GM10248 (cell line): ENCODE measurements at regions of chr7 and their contacts with region 1.

Region 1: DNA sequence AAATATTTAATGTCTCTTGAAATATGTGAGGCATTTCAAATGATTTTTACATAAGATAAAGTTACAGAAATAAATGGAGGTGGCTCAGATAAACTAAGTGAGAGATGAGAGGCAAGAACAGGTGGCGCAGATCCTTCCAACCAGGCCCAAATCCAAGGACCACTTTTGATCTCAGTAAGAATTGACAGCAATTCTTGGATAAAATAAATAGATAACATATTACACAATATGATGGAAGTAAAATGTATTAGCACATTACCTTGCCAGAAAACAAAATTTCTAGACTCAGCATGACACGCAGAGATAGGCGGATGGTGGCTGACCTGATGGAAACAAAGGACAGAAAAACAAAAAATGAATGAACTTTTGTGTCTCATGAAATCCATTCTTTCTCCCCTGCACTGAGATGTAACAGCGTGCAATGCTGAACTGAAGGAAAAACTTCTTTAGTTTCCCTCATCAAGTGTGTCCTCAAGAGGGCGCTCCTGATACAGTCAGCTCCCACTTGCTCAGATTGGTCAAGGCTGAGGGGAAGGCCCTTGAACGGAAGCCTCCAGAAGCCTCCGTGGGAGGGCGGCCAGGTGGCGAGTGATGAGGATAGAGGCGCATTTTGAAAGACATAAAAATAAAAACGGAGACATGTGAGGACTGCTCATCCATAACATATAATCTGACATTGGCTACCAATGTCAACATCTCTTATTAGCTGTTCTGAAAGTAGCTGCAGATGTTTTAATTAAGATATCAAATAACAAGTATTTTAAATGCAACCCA is 62.8 kb upstream of the GSDME start:
- DNase-seq: peak; percentile 81
- CTCF ChIP-seq: peak; percentile 75

Region 2: DNA sequence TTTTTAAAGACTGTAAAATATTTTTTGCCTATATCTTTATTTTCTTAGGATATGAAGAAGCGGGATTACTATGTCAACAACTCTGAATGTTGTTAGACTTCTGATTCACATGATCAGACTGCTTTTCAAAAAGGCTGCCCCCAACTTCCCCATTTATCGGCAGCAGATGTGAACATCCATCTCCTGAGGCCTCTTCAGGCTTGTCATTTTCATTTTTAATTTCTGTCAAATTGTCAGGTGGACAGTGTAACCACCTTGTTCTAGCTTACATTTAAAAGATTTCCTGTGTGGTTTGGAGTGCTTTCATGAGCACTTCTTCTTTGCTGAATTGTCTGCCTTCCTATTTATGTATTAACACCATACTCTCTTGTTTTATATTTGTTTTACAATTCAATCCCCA is 16.0 kb after region 1 on chr7:
- CTCF ChIA-PET with region 1: interaction called, 75 read pairs
- POLR2A ChIA-PET with region 1: no interaction called
- DNase-seq: peak; percentile 42
- CTCF ChIP-seq: no peak

Region 3: GRCh38 chr7:24911213-24911603 is 91.1 kb after region 1 on chr7:
- CTCF ChIA-PET with region 1: interaction called, 11 read pairs
- POLR2A ChIA-PET with region 1: no interaction called
- DNase-seq: no peak
- CTCF ChIP-seq: no peak

Region 4: GRCh38 chr7:25069900-25070443 is 249.9 kb after region 1 on chr7:
- CTCF ChIA-PET with region 1: interaction called, 72 read pairs
- POLR2A ChIA-PET with region 1: no interaction called
- DNase-seq: peak; percentile 81
- CTCF ChIP-seq: peak; percentile 77